Heart right ventricle (tissue), 16 donors: ENCODE measurements at regions of chr1 and their contacts with region 1.

Region 1: DNA sequence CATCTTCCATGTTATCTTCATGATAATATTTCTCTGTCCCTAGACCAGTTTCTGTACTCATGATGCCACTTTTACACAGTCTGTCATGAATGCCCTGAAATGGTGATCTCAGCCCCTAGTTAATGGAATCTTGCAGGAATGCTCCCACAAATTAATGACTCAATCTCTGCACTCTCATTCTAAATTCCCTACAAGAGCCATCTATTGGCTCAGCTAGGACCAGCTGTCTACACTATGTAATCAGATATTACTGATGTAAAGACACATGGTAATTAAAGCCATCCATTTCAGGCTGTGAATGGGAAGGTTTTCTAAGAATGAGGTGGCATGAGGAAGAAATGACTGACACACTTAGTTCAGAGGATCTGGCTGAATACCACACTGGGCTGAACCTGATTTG is 199.1 kb upstream of the KCND3 start:
- DNase-seq: no peak
- ATAC-seq: no peak
- H3K4me3 ChIP-seq: no peak overlapping the region
- H3K27ac ChIP-seq: no peak overlapping the region
- H3K4me1 ChIP-seq: no peaks in the 10 kb centered on the region
- H3K27me3 ChIP-seq: no peaks in the 10 kb centered on the region
- CTCF ChIP-seq: no peak

Region 2: GRCh38 chr1:111778541-111779051 is 410.0 kb before region 1 on chr1:
- intact Hi-C with region 1: loop called in 1 of 10 experiments (anchors 5 kb)
- DNase-seq: no peak
- ATAC-seq: no peak
- H3K4me3 ChIP-seq: no peak overlapping the region
- H3K27ac ChIP-seq: no peak overlapping the region
- H3K4me1 ChIP-seq: peaks cover 0 to 6% (median 0%) of the 10 kb centered on the region in 9 donors
- H3K27me3 ChIP-seq: no peaks in the 10 kb centered on the region
- CTCF ChIP-seq: no peak

Region 3: GRCh38 chr1:112325504-112325903 is 136.9 kb after region 1 on chr1:
- intact Hi-C with region 1: loop called in 1 of 10 experiments (anchors 10 kb)
- DNase-seq: peak in 1 of 2 donors; percentile 7
- ATAC-seq: peak in 6 of 8 donors; percentile 41 to 74 (median 62)
- H3K4me3 ChIP-seq: no peak overlapping the region
- H3K27ac ChIP-seq: no peak overlapping the region
- H3K4me1 ChIP-seq: peaks cover 0 to 20% (median 0%) of the 10 kb centered on the region in 9 donors
- H3K27me3 ChIP-seq: peaks cover 0 to 9% (median 0%) of the 10 kb centered on the region in 7 donors
- CTCF ChIP-seq: no peak

Region 4: GRCh38 chr1:112461194-112462082 is 272.8 kb after region 1 on chr1:
- intact Hi-C with region 1: no loop called
- DNase-seq: no peak
- ATAC-seq: no peak
- H3K4me3 ChIP-seq: peak overlapping the region in 3 of 10 donors; percentile 23 to 33 (median 23)
- H3K27ac ChIP-seq: peak overlapping the region in 7 of 10 donors; percentile 1 to 70 (median 57)
- H3K4me1 ChIP-seq: peaks cover 3 to 38% (median 10%) of the 10 kb centered on the region in 9 donors
- H3K27me3 ChIP-seq: no peaks in the 10 kb centered on the region
- CTCF ChIP-seq: no peak